Mammary epithelial cell (primary cell): ENCODE measurements at regions of chr3 and their contacts with region 1.

Region 1: DNA sequence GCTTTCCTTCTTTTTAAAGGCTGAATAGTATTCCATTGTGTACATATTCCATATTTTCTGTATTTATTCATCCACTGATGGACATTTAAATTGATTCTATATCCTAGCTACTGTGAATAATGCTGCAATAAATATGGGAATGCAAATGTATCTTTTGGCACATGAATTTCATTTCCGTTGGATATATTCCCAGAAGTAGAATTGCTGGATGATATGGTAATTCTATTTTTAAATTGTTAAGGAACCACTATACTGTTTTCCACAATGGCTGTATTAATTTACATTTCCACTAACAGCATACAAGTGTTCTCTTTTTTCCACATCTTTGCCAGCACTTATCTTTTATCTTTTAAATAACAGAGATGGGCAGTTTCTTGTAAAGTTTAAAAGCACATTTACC is 302.7 kb downstream of the CTNNB1 start:
- DNase-seq: no peak
- H3K4me3 ChIP-seq: no peak overlapping the region
- H3K27ac ChIP-seq: no peak overlapping the region
- H3K4me1 ChIP-seq: no peaks in the 10 kb centered on the region
- H3K27me3 ChIP-seq: no peaks in the 10 kb centered on the region
- CTCF ChIP-seq: no peak

Region 2: GRCh38 chr3:40546816-40547215 is 955.2 kb before region 1 on chr3:
- CTCF ChIA-PET with region 1: interaction called, 20 read pairs
- dilution Hi-C with region 1: no loop called
- in situ Hi-C with region 1: no loop called
- intact Hi-C with region 1: no loop called
- DNase-seq: peak; percentile 60
- H3K4me3 ChIP-seq: no peak overlapping the region
- H3K27ac ChIP-seq: no peak overlapping the region
- H3K4me1 ChIP-seq: no peaks in the 10 kb centered on the region
- H3K27me3 ChIP-seq: no peaks in the 10 kb centered on the region
- CTCF ChIP-seq: no peak

Region 3: GRCh38 chr3:41488501-41488900 is 13.5 kb before region 1 on chr3:
- CTCF ChIA-PET with region 1: no interaction called
- dilution Hi-C with region 1: no loop called
- in situ Hi-C with region 1: no loop called
- intact Hi-C with region 1: no loop called
- DNase-seq: no peak
- H3K4me3 ChIP-seq: no peak overlapping the region
- H3K27ac ChIP-seq: no peak overlapping the region
- H3K4me1 ChIP-seq: no peaks in the 10 kb centered on the region
- H3K27me3 ChIP-seq: no peaks in the 10 kb centered on the region
- CTCF ChIP-seq: no peak